Dendritic cell treated with granulocyte-macrophage colony-stimulating factor and Interleukin-4, amounts not matched to agents 40 ng/mL and 50 ng/mL, for 4 days (primary cell): ENCODE measurements at regions of chr10 and their contacts with region 1.

Region 1: DNA sequence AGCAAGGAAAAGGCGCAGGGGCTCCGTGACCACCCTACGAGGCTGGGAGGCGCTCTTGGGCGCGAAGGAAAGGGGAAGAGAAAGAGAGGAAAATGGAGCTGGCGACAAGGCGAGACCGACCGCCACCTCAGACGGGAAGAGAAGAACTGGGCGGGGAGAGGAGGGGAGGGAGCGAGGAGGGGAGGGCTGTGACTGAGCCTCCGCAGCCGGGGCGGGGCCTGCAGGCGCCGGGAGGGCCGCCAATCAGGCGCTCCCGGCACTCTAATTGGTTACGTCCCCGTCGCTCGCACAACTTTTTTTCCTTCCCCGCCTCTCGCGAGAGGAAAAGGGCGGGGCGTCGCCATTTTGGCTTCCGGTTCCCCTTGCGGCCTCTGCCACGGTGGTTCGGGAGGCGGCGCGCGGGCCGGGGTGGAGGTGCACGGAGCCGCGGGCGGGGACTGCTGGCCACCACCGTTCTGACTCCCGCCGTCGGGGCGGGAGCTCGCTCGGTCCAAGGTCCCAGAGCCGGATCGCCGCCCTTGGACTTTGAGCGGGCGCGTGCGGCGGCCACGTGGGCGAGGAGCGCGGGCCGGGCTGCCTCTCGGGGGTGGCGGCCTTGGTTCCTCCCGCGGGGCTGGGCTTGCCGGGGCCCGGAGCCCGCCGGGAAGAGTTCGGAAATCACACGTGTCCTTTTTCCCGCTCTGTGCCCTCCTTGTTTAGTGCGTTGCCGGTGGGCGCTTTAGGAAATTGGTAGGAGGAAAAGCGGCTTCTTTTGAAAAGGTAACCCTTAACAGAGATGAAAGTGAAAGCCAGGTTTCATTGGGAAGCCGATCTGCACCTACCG is at the start of gene GDI2:
- H3K4me3 Mint-ChIP-seq: peak within 1 kb of the TSS; percentile 99
- H3K27ac Mint-ChIP-seq: peak within 1 kb of the TSS; percentile 98
- H3K4me1 Mint-ChIP-seq: peaks cover 68% of the 10 kb centered on the region
- H3K27me3 Mint-ChIP-seq: no peaks in the 10 kb centered on the region

Region 2: GRCh38 chr10:5645375-5645774 is 168.1 kb before region 1 on chr10:
- intact Hi-C with region 1: no loop called
- H3K4me3 Mint-ChIP-seq: no peak overlapping the region
- H3K27ac Mint-ChIP-seq: no peak overlapping the region
- H3K4me1 Mint-ChIP-seq: no peaks in the 10 kb centered on the region
- H3K27me3 Mint-ChIP-seq: no peaks in the 10 kb centered on the region

Region 3: GRCh38 chr10:5684318-5684970 is 129.1 kb before region 1 on chr10 and contains the start of gene TASOR2:
- intact Hi-C with region 1: loop called (anchors 5 kb)
- H3K4me3 Mint-ChIP-seq: peak within 1 kb of the TSS; percentile 94
- H3K27ac Mint-ChIP-seq: peak within 1 kb of the TSS; percentile 87
- H3K4me1 Mint-ChIP-seq: peaks cover 24% of the 10 kb centered on the region
- H3K27me3 Mint-ChIP-seq: no peaks in the 10 kb centered on the region

Region 4: DNA sequence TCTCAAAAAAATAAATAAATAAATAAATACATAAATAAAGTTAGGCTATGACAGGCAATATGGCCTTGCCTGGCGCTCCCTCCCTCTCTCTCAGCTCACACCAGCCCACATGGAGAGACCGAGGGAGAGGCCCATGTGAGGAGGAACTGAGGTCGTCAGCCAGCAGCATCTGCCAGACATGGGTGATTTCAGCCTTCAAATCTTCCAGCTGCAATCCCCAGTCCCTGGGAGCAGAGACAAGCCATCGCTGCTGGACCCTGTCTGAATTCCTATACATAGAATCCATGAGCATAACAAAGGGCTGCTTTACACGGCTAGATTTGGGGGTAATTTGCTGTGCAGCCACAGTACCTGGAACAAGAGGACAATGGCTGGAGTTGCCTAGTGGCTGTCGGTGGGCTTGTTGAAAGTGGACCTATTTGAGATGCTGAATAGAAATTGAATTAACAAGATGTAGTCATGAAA is 40.6 kb after region 1 on chr10:
- intact Hi-C with region 1: loop called (anchors 2 kb)
- H3K4me3 Mint-ChIP-seq: no peak overlapping the region
- H3K27ac Mint-ChIP-seq: no peak overlapping the region
- H3K4me1 Mint-ChIP-seq: peaks cover 24% of the 10 kb centered on the region
- H3K27me3 Mint-ChIP-seq: peaks cover 1% of the 10 kb centered on the region

Region 5: GRCh38 chr10:5873515-5873995 is 60.1 kb after region 1 on chr10:
- intact Hi-C with region 1: loop called (anchors 1 kb)
- H3K4me3 Mint-ChIP-seq: peak overlapping the region; percentile 77
- H3K27ac Mint-ChIP-seq: peak overlapping the region; percentile 71
- H3K4me1 Mint-ChIP-seq: peaks cover 15% of the 10 kb centered on the region
- H3K27me3 Mint-ChIP-seq: no peaks in the 10 kb centered on the region

Region 6: DNA sequence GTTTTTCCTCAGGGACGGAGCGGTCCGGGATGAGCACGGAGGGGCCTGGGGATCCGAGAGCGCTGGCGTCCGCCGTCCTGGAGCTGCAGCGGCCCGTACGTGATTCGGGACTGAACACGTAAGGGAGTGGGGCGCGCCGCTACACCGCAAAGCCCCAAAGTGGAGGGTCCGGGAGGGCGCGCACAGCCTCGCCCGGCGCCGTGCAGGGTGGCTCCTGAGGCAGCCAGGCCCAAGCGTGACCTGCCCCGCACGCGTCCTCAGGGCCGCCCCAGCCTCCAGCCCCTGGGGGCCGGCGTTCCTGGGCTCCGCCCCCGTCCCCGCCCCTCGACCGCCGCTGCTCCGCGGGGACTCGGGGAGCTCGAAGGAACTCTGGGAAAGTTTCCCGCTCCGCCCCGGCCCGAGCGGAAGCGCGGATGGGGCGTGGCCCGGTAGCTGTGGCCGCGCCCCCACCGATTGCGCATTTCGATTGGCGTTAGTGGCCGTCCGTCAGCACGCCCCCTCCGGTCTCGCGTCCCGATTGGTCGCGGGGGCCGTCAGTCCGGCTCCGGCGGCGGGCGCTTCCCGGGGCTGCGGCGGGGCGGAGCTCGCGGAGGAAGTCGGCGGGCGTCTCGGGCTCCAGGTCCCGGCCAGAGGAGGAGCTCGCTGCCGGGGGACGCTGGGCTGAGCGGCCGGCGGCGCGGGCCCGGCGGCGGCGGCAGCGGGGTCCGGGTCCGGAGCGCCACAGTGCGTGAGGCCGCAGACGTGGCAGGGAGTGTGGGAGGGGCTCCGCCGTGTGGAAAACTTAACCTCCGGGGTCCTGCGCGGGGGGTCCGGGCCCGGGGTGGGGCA is 76.3 kb after region 1 on chr10 and contains the starts of genes ANKRD16 and FBH1:
- intact Hi-C with region 1: loop called (anchors 1 kb)
- H3K4me3 Mint-ChIP-seq: peak within 1 kb of the TSS; percentile 85
- H3K27ac Mint-ChIP-seq: peak within 1 kb of the TSS; percentile 83
- H3K4me1 Mint-ChIP-seq: peaks cover 32% of the 10 kb centered on the region
- H3K27me3 Mint-ChIP-seq: no peaks in the 10 kb centered on the region

Region 7: GRCh38 chr10:7054900-7055299 is 1241.4 kb after region 1 on chr10:
- intact Hi-C with region 1: no loop called
- H3K4me3 Mint-ChIP-seq: no peak overlapping the region
- H3K27ac Mint-ChIP-seq: no peak overlapping the region
- H3K4me1 Mint-ChIP-seq: peaks cover 5% of the 10 kb centered on the region
- H3K27me3 Mint-ChIP-seq: no peaks in the 10 kb centered on the region